Natural killer cell (primary cell): ENCODE measurements at regions of chr6 and their contacts with region 1.

Region 1: GRCh38 chr6:159862103-159862502 is 28.7 kb upstream of the MAS1 start:
- DNase-seq: peak in 1 of 2 donors; percentile 57
- ATAC-seq: no peak
- H3K4me3 ChIP-seq: no peak overlapping the region
- H3K4me3 Mint-ChIP-seq: no peak overlapping the region
- H3K27ac ChIP-seq: no peak overlapping the region
- H3K27ac Mint-ChIP-seq: no peak overlapping the region
- H3K4me1 ChIP-seq: no peaks in the 10 kb centered on the region
- H3K4me1 Mint-ChIP-seq: no peaks in the 10 kb centered on the region
- H3K27me3 ChIP-seq: peaks cover 2% of the 10 kb centered on the region
- H3K27me3 Mint-ChIP-seq: peaks cover 23 to 31% of the 10 kb centered on the region in 2 donors
- CTCF ChIP-seq: no peak

Region 2: GRCh38 chr6:159151266-159151855 is 710.7 kb before region 1 on chr6:
- intact Hi-C with region 1: no loop called
- DNase-seq: peak in 1 of 2 donors; percentile 67
- ATAC-seq: peak; percentile 74 to 78 (median 77)
- H3K4me3 ChIP-seq: no peak overlapping the region
- H3K4me3 Mint-ChIP-seq: no peak overlapping the region
- H3K27ac ChIP-seq: no peak overlapping the region
- H3K27ac Mint-ChIP-seq: no peak overlapping the region
- H3K4me1 ChIP-seq: no peaks in the 10 kb centered on the region
- H3K4me1 Mint-ChIP-seq: peaks cover 6% of the 10 kb centered on the region in 2 donors
- H3K27me3 ChIP-seq: peaks cover 2% of the 10 kb centered on the region
- H3K27me3 Mint-ChIP-seq: peaks cover 15 to 29% of the 10 kb centered on the region in 2 donors
- CTCF ChIP-seq: peak; percentile 94

Region 3: GRCh38 chr6:159844737-159845645 is 17.1 kb before region 1 on chr6:
- intact Hi-C with region 1: no loop called
- DNase-seq: no peak
- ATAC-seq: peak in 1 of 3 donors; percentile 14
- H3K4me3 ChIP-seq: no peak overlapping the region
- H3K4me3 Mint-ChIP-seq: no peak overlapping the region
- H3K27ac ChIP-seq: no peak overlapping the region
- H3K27ac Mint-ChIP-seq: no peak overlapping the region
- H3K4me1 ChIP-seq: peaks cover 6% of the 10 kb centered on the region
- H3K4me1 Mint-ChIP-seq: no peaks in the 10 kb centered on the region
- H3K27me3 ChIP-seq: no peaks in the 10 kb centered on the region
- H3K27me3 Mint-ChIP-seq: peaks cover 0 to 4% of the 10 kb centered on the region in 2 donors
- CTCF ChIP-seq: no peak

Region 4: GRCh38 chr6:160071800-160072690 is 209.9 kb after region 1 on chr6:
- intact Hi-C with region 1: loop called (anchors 10 kb)
- DNase-seq: no peak
- ATAC-seq: no peak
- H3K4me3 ChIP-seq: no peak overlapping the region
- H3K4me3 Mint-ChIP-seq: no peak overlapping the region
- H3K27ac ChIP-seq: no peak overlapping the region
- H3K27ac Mint-ChIP-seq: peak overlapping the region; percentile 23 to 29
- H3K4me1 ChIP-seq: peaks cover 31% of the 10 kb centered on the region
- H3K4me1 Mint-ChIP-seq: peaks cover 32 to 42% of the 10 kb centered on the region in 2 donors
- H3K27me3 ChIP-seq: no peaks in the 10 kb centered on the region
- H3K27me3 Mint-ChIP-seq: no peaks in the 10 kb centered on the region
- CTCF ChIP-seq: no peak